Dendritic cell treated with granulocyte-macrophage colony-stimulating factor and Interleukin-4, amounts not matched to agents 40 ng/mL and 50 ng/mL, for 4 days (primary cell): ENCODE measurements at regions of chr9 and their contacts with region 1.

Region 1: DNA sequence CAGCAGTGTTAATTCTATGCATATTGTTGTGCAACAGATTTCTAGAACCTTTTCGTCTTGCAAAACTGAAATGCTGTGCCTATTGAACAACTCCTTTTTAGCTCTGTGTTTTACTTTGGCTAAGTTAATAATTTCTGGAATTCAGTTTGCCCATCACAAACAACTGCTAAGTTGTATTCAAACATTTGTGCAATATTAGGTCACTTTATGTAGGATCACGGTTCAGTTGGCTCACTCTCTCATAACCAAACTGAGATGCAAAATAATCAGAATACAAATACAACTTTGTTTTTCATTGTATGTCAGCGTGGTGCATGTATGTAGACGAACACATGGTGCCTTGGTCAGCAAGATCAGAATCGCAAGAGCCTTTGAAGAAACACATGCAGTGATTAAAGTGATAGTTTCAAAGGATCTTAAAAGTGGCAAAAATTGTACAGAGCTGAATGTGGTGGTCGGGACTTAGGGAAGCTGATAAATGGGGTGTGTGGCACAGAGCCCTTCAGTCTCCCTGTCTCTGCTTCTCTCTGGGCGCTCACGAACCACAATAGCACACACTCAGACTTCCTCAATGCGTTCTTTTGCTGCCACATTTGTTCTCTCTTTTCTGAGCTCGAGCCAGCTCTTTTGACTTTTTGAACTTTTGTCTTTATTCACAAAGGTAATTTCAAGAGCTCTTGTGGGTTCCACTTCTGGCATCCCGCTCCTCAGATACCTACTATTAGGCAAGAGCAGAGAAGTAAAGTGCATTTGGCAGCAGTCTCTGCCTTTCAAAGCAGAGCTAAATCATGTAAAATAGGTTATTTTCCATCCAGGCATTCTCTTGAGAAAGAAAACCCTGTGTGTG is 112.4 kb upstream of the CTSL start:
- H3K4me3 Mint-ChIP-seq: no peak overlapping the region
- H3K27ac Mint-ChIP-seq: peak overlapping the region; percentile 84
- H3K4me1 Mint-ChIP-seq: peaks cover 95% of the 10 kb centered on the region
- H3K27me3 Mint-ChIP-seq: no peaks in the 10 kb centered on the region

Region 2: DNA sequence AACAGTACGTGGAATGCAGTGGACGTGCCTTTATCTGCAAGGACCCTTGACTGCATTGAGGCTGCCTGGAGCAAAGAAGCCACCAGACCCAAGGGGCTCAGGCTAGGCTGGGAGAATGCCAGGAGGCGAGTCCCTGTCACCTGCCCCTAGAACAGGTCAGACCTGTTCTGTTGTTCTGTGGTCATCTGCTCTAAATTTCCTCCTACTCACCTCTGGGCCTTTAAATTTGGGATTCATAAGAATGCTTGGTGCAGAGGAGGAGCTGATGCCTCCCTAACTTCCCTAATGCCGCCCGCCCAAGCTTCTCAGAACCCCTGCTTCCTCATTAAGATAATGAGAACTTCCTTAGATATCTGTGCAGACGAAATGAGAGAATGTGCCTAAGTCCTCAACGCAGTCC is 83.8 kb before region 1 on chr9:
- intact Hi-C with region 1: loop called (anchors 1 kb)
- H3K4me3 Mint-ChIP-seq: peak overlapping the region; percentile 57
- H3K27ac Mint-ChIP-seq: peak overlapping the region; percentile 87
- H3K4me1 Mint-ChIP-seq: peaks cover 74% of the 10 kb centered on the region
- H3K27me3 Mint-ChIP-seq: no peaks in the 10 kb centered on the region

Region 3: GRCh38 chr9:87650611-87651295 is 37.3 kb after region 1 on chr9:
- intact Hi-C with region 1: loop called (anchors 5 kb)
- H3K4me3 Mint-ChIP-seq: no peak overlapping the region
- H3K27ac Mint-ChIP-seq: no peak overlapping the region
- H3K4me1 Mint-ChIP-seq: peaks cover 34% of the 10 kb centered on the region
- H3K27me3 Mint-ChIP-seq: no peaks in the 10 kb centered on the region

Region 4: GRCh38 chr9:87662808-87663528 is 49.5 kb after region 1 on chr9:
- intact Hi-C with region 1: no loop called
- H3K4me3 Mint-ChIP-seq: no peak overlapping the region
- H3K27ac Mint-ChIP-seq: peak overlapping the region; percentile 35
- H3K4me1 Mint-ChIP-seq: peaks cover 38% of the 10 kb centered on the region
- H3K27me3 Mint-ChIP-seq: no peaks in the 10 kb centered on the region